ENCODE measurements at regions of chr3 and their contacts with region 1.

Region 1: DNA sequence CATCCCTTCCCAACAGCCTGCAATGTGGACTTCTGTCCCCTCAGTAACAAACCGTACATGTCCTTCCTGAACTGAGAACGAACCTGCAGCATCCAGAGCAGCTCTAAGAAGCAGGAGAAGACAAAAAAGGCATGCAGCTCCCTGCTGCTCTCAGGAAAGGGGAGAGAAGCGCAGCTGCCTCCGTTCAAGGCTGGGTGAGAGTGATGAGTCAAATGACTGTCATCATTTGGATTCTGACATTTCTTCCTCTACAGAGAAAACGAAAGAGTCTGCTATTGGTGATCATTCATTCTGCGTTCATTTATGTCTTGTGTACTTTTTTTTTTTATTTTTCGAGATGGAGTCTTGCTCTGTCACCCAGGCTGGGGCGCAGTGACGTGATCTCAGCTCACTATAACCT is 677.8 kb downstream of the FHIT start:
- DNase-seq: no peak
- ATAC-seq: no peak
- H3K4me3 ChIP-seq: no peak overlapping the region
- H3K4me3 Mint-ChIP-seq: no peak overlapping the region
- H3K27ac ChIP-seq: no peak overlapping the region
- H3K27ac Mint-ChIP-seq: no peak overlapping the region
- H3K4me1 ChIP-seq: no peaks in the 10 kb centered on the region
- H3K4me1 Mint-ChIP-seq: no peaks in the 10 kb centered on the region
- H3K27me3 ChIP-seq: no peaks in the 10 kb centered on the region
- H3K27me3 Mint-ChIP-seq: no peaks in the 10 kb centered on the region
- CTCF ChIP-seq: no peak

Region 2: DNA sequence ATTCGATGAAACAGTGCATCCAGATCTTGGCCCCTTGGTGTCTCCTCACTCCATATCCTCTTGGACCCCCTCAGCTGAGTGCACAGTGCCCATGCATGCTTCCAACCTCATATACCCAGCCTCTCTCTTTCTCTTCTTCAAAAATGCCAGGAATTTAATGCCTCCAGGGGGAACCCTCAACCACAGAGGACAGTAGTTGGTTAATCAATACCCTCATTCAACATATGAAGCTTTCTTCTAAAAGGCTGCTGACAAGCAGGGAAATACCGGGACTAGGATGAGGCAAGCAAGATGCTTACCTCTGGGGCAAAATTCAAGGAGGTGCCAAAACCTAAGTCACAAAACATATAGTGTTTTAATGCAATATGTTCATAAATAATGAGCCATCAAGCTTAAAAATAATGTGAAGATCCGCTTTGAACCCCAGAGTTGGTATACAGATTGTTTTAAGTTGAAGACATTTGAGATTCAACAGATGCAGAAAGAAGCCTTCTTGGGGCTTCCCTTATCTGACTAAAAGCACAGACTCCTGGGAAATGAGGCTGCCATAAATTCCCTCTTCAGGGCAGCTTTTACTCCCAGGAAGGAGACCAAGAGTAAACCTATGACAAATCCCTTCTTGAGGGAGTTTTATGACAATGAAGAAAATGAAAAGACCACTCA is 726.0 kb after region 1 on chr3:
- CTCF ChIA-PET with region 1: no interaction called
- POLR2A ChIA-PET with region 1: no interaction called
- intact Hi-C with region 1: loop called in 1 of 2 experiments (anchors 5 kb)
- DNase-seq: no peak
- ATAC-seq: no peak
- H3K4me3 ChIP-seq: no peak overlapping the region
- H3K4me3 Mint-ChIP-seq: no peak overlapping the region
- H3K27ac ChIP-seq: no peak overlapping the region
- H3K27ac Mint-ChIP-seq: no peak overlapping the region
- H3K4me1 ChIP-seq: no peaks in the 10 kb centered on the region
- H3K4me1 Mint-ChIP-seq: no peaks in the 10 kb centered on the region
- H3K27me3 ChIP-seq: no peaks in the 10 kb centered on the region
- H3K27me3 Mint-ChIP-seq: peaks cover 5% of the 10 kb centered on the region
- CTCF ChIP-seq: no peak

Measured in CD4-positive, alpha-beta T cell (primary cell).